ENCODE measurements at regions of chr6 and their contacts with region 1.

Region 1: DNA sequence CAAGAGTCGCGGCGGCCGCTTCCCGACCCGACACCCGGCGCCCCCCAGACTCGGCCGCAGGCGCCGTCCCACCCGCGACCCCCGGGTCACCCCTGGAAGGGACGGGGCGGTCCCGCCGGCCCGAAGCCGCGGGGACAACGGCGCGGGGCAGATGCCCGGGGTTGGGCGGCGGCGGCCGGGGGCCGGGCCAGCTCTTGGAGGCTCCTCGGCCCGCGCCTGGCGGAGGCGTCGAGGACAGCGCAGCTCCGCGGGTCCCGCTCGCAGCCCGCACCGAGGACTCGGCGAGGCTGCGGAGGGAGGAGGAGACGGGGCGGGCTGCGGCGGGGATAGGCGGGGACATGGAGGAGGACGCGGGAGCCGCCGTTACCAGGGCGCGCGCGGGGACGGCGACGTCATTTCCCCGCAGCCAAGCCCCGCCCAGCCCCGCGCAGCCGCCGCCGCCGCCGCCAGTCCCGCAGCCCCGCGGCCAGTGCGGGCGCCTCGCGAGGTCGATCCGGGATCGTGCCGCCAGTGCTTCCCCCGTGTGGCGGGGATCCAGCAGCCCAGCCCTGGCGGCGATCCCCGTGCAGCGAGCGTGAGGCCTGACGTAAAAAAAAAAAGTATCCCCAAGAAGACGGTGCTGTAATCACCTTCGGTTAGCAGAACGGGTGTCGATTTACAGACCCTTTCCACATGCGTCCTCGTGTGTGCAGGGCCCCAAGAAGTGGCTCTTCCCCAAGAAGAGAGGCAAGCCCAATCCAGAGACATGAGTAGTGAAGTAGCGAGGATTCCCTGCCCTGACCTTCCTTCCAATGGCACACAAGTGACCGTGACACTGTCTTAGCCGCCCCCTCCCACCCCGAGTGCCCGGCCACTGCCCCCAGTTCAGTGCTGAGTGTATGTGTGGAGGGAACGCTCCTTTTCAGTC is at the start of gene FAM184A:
- DNase-seq: peak; percentile 81 to 84 (median 82)
- H3K4me3 ChIP-seq: peak within 1 kb of the TSS; percentile 68 to 80
- H3K4me3 Mint-ChIP-seq: peak within 1 kb of the TSS; percentile 90 to 98 (median 96)
- H3K27ac ChIP-seq: peak within 1 kb of the TSS; percentile 38
- H3K27ac Mint-ChIP-seq: peak within 1 kb of the TSS; percentile 90 to 98 (median 95)
- H3K4me1 ChIP-seq: peaks cover 35% of the 10 kb centered on the region
- H3K4me1 Mint-ChIP-seq: peaks cover 30 to 39% (median 33%) of the 10 kb centered on the region in 4 donors
- H3K27me3 ChIP-seq: no peaks in the 10 kb centered on the region
- H3K27me3 Mint-ChIP-seq: no peaks in the 10 kb centered on the region
- total RNA-seq, gene FAM184A: 5.6 to 6.1 TPM

Region 2: GRCh38 chr6:117547688-117548621 is 1530.7 kb before region 1 on chr6:
- CTCF ChIA-PET with region 1: no interaction called
- POLR2A ChIA-PET with region 1: no interaction called
- intact Hi-C with region 1: loop called (anchors 5 kb)
- DNase-seq: peak; percentile 32 to 74 (median 43)
- H3K4me3 ChIP-seq: peak overlapping the region; percentile 50 to 73
- H3K4me3 Mint-ChIP-seq: peak overlapping the region; percentile 82 to 91 (median 88)
- H3K27ac ChIP-seq: peak overlapping the region; percentile 41
- H3K27ac Mint-ChIP-seq: peak overlapping the region; percentile 86 to 98 (median 92)
- H3K4me1 ChIP-seq: peaks cover 38% of the 10 kb centered on the region
- H3K4me1 Mint-ChIP-seq: peaks cover 26 to 49% (median 40%) of the 10 kb centered on the region in 4 donors
- H3K27me3 ChIP-seq: no peaks in the 10 kb centered on the region
- H3K27me3 Mint-ChIP-seq: no peaks in the 10 kb centered on the region

Region 3: GRCh38 chr6:117674991-117675657 is 1403.5 kb before region 1 on chr6 and contains the start of gene NUS1:
- CTCF ChIA-PET with region 1: no interaction called
- POLR2A ChIA-PET with region 1: no interaction called
- intact Hi-C with region 1: loop called (anchors 5 kb)
- DNase-seq: peak; percentile 97
- H3K4me3 ChIP-seq: peak within 1 kb of the TSS; percentile 81 to 84
- H3K4me3 Mint-ChIP-seq: peak within 1 kb of the TSS; percentile 89 to 96 (median 93)
- H3K27ac ChIP-seq: peak within 1 kb of the TSS; percentile 67
- H3K27ac Mint-ChIP-seq: peak within 1 kb of the TSS; percentile 85 to 97 (median 95)
- H3K4me1 ChIP-seq: peaks cover 37% of the 10 kb centered on the region
- H3K4me1 Mint-ChIP-seq: peaks cover 38 to 64% (median 52%) of the 10 kb centered on the region in 4 donors
- H3K27me3 ChIP-seq: no peaks in the 10 kb centered on the region
- H3K27me3 Mint-ChIP-seq: no peaks in the 10 kb centered on the region
- total RNA-seq, gene NUS1: 33.0 to 33.2 TPM

Region 4: DNA sequence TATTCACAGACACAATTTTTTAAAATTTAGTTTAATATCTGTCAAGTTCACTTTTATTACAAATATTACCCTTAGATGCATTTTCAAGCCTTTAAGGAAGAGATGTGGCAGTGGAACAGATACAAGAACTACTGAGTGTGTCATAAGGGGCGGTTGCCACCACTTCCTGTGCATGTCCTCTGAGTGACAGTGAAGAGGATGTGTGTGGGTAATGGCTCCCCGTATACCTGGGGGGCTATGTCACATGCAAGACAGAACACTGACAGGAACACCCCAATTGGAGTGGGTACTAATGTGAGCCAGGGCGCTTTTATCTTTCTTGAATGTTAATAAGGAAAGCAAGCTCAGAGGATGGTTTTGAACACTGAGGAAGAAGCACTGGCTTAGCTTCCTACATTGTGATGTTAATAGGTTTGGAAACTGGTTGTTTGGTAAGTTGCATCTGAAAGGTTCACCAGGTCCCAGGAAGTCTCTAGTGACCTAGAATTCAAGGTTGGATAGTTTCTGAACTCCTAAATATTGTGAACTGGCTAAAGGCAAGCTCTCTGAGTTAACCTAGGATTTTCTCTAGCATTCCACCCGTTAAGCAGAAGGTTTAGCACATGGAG is 268.1 kb before region 1 on chr6:
- CTCF ChIA-PET with region 1: interaction called, 4 read pairs
- POLR2A ChIA-PET with region 1: no interaction called
- intact Hi-C with region 1: loop called (anchors 10 kb)
- DNase-seq: peak; percentile 74 to 89 (median 84)
- H3K4me3 ChIP-seq: peak overlapping the region in 1 of 2 donors; percentile 12
- H3K4me3 Mint-ChIP-seq: peak overlapping the region; percentile 62 to 91 (median 82)
- H3K27ac ChIP-seq: peak overlapping the region; percentile 49
- H3K27ac Mint-ChIP-seq: peak overlapping the region; percentile 87 to 99 (median 96)
- H3K4me1 ChIP-seq: peaks cover 47% of the 10 kb centered on the region
- H3K4me1 Mint-ChIP-seq: peaks cover 46 to 77% (median 51%) of the 10 kb centered on the region in 4 donors
- H3K27me3 ChIP-seq: no peaks in the 10 kb centered on the region
- H3K27me3 Mint-ChIP-seq: no peaks in the 10 kb centered on the region

Region 5: GRCh38 chr6:118934461-118935330 is 143.9 kb before region 1 on chr6 and contains the start of gene MCM9:
- CTCF ChIA-PET with region 1: no interaction called
- POLR2A ChIA-PET with region 1: interaction called, 17 read pairs
- intact Hi-C with region 1: loop called (anchors 1 kb)
- DNase-seq: peak; percentile 84 to 88 (median 85)
- H3K4me3 ChIP-seq: peak within 1 kb of the TSS; percentile 88 to 98
- H3K4me3 Mint-ChIP-seq: peak within 1 kb of the TSS; percentile 90 to 94 (median 91)
- H3K27ac ChIP-seq: peak within 1 kb of the TSS; percentile 84
- H3K27ac Mint-ChIP-seq: peak within 1 kb of the TSS; percentile 89 to 96 (median 93)
- H3K4me1 ChIP-seq: peaks cover 19% of the 10 kb centered on the region
- H3K4me1 Mint-ChIP-seq: peaks cover 21 to 43% (median 25%) of the 10 kb centered on the region in 4 donors
- H3K27me3 ChIP-seq: no peaks in the 10 kb centered on the region
- H3K27me3 Mint-ChIP-seq: no peaks in the 10 kb centered on the region
- total RNA-seq, gene MCM9: 33.8 to 36.6 TPM

Region 6: DNA sequence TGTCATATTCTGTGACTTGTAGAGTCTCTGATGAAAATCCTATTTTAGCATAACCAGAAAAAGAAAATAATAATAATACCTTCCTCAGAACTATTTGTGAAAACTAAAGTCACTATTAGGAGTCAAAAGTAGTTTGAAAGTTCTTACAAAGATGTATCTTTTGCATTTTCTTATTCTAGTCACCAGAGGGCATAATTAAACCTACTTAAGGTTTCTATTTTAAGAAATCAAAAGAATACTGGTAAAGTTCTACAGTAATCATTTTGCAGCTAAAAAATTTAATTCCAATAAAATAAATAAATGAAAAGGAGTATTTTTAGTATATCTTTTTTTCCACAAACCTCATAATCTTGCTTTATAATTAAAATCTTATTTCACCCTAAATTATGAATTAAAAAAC is 115.6 kb before region 1 on chr6:
- CTCF ChIA-PET with region 1: interaction called, 12 read pairs
- POLR2A ChIA-PET with region 1: no interaction called
- intact Hi-C with region 1: no loop called
- DNase-seq: peak in 3 of 5 donors; percentile 4 to 16 (median 12)
- H3K4me3 ChIP-seq: no peak overlapping the region
- H3K4me3 Mint-ChIP-seq: no peak overlapping the region
- H3K27ac ChIP-seq: no peak overlapping the region
- H3K27ac Mint-ChIP-seq: no peak overlapping the region
- H3K4me1 ChIP-seq: no peaks in the 10 kb centered on the region
- H3K4me1 Mint-ChIP-seq: peaks cover 0 to 6% (median 4%) of the 10 kb centered on the region in 4 donors
- H3K27me3 ChIP-seq: no peaks in the 10 kb centered on the region
- H3K27me3 Mint-ChIP-seq: no peaks in the 10 kb centered on the region

Region 7: GRCh38 chr6:119028091-119028490 is 50.5 kb before region 1 on chr6:
- CTCF ChIA-PET with region 1: no interaction called
- POLR2A ChIA-PET with region 1: no interaction called
- intact Hi-C with region 1: no loop called
- DNase-seq: no peak
- H3K4me3 ChIP-seq: no peak overlapping the region
- H3K4me3 Mint-ChIP-seq: no peak overlapping the region
- H3K27ac ChIP-seq: no peak overlapping the region
- H3K27ac Mint-ChIP-seq: no peak overlapping the region
- H3K4me1 ChIP-seq: no peaks in the 10 kb centered on the region
- H3K4me1 Mint-ChIP-seq: no peaks in the 10 kb centered on the region
- H3K27me3 ChIP-seq: no peaks in the 10 kb centered on the region
- H3K27me3 Mint-ChIP-seq: no peaks in the 10 kb centered on the region

Region 8: DNA sequence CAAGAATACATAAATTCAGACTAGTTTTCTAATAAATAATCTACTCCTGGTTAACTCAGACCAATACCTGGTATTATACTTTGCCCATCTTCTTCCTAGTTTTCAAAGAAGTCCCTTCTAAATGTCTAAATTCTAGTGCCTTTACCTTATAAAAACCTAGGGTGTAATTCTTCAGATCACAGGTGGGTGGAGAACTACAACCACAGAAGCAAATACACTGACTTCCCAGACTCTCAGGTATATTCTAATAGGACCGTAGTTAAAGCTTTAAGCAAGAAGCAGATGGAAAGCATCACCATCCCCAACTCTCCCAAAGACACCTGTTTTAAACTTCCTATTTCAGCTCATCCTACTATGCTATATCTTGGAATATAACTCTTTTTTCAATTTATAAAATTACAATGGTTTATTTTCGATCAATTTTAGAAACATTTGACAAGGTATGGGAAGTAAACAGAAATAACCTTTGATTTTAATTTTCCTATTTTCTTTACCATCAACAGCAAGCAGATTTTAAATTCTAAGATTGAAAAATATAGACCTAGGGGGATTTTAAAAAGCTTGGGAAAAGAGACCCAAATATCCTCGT is 255.2 kb after region 1 on chr6:
- CTCF ChIA-PET with region 1: no interaction called
- POLR2A ChIA-PET with region 1: no interaction called
- intact Hi-C with region 1: no loop called
- DNase-seq: peak in 4 of 5 donors; percentile 29 to 44 (median 37)
- H3K4me3 ChIP-seq: no peak overlapping the region
- H3K4me3 Mint-ChIP-seq: no peak overlapping the region
- H3K27ac ChIP-seq: no peak overlapping the region
- H3K27ac Mint-ChIP-seq: no peak overlapping the region
- H3K4me1 ChIP-seq: peaks cover 5% of the 10 kb centered on the region
- H3K4me1 Mint-ChIP-seq: peaks cover 6 to 31% (median 26%) of the 10 kb centered on the region in 4 donors
- H3K27me3 ChIP-seq: no peaks in the 10 kb centered on the region
- H3K27me3 Mint-ChIP-seq: no peaks in the 10 kb centered on the region